PC-3 (cell line): ENCODE measurements at regions of chr5 and their contacts with region 1.

Region 1: GRCh38 chr5:99878830-99879229 is 656.3 kb upstream of the FAM174A start:
- DNase-seq: no peak
- ATAC-seq: no peak
- H3K4me3 ChIP-seq: no peak overlapping the region
- H3K27ac ChIP-seq: no peak overlapping the region
- H3K4me1 ChIP-seq: no peaks in the 10 kb centered on the region
- H3K27me3 ChIP-seq: no peaks in the 10 kb centered on the region
- CTCF ChIP-seq: no peak

Region 2: DNA sequence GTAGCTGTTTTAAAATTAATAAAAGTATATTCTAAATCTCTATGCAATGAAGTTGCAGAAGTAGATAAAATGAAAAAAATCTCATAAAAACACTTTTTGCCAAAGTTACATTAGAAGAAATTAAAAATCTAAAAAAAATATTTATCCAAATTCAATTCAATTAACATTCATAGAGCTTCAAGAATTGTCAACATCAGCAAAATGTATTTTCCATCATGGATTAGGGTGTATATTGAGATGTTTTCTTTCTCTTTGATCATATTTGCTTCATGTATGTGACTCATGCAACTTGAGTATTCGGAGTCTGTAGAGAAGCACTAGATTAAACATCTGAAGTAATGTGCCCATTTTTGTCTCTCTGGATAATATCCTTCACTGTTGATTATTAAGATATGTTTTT is 241.1 kb after region 1 on chr5:
- CTCF ChIA-PET with region 1: no interaction called
- POLR2A ChIA-PET with region 1: no interaction called
- intact Hi-C with region 1: no loop called
- DNase-seq: no peak
- ATAC-seq: no peak
- H3K4me3 ChIP-seq: no peak overlapping the region
- H3K27ac ChIP-seq: no peak overlapping the region
- H3K4me1 ChIP-seq: no peaks in the 10 kb centered on the region
- H3K27me3 ChIP-seq: no peaks in the 10 kb centered on the region
- CTCF ChIP-seq: no peak

Region 3: DNA sequence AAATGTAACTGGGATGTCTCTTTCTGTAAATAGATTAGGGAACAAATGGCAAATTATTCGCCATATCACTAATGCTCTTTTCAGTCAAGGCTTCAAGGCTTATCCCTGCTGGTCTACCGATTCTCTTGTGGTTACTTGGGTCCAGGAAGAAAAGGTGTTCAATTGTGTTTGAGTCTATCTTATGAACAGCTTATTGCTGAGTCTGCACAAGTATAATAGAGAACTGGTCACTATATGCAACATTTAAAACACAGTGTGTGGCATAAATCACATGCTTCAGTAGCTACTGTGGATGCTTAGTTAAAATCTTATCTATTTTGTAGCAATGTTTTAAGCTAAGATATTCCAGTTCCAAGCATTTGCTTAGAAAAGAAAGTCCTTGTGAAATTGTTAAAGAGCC is 382.1 kb after region 1 on chr5:
- CTCF ChIA-PET with region 1: no interaction called
- POLR2A ChIA-PET with region 1: no interaction called
- intact Hi-C with region 1: loop called (anchors 10 kb)
- DNase-seq: no peak
- ATAC-seq: no peak
- H3K4me3 ChIP-seq: no peak overlapping the region
- H3K27ac ChIP-seq: no peak overlapping the region
- H3K4me1 ChIP-seq: no peaks in the 10 kb centered on the region
- H3K27me3 ChIP-seq: no peaks in the 10 kb centered on the region
- CTCF ChIP-seq: no peak